ENCODE measurements at regions of chr17 and their contacts with region 1.

Region 1: GRCh38 chr17:11610999-11611566 is 12.8 kb downstream of the DNAH9 start:
- DNase-seq: peak; percentile 66
- H3K4me3 ChIP-seq: no peak overlapping the region
- H3K27ac ChIP-seq: peak overlapping the region in 1 of 2 experiments; percentile 99; a peak in 2 of 4 replicates
- H3K4me1 ChIP-seq: peaks cover 0 to 50% of the 10 kb centered on the region in 2 experiments; a peak in 3 of 4 replicates
- H3K27me3 ChIP-seq: no peaks in the 10 kb centered on the region
- CTCF ChIP-seq: no peak
- EP300 ChIP-seq: peak in 1 of 2 experiments; percentile 75; a peak in 1 of 4 replicates
- RAD21 ChIP-seq: no peak

Region 2: GRCh38 chr17:11495613-11496012 is 115.5 kb before region 1 on chr17:
- CTCF ChIA-PET with region 1: no interaction called
- POLR2A ChIA-PET with region 1: no interaction called
- DNase-seq: no peak
- H3K4me3 ChIP-seq: no peak overlapping the region
- H3K27ac ChIP-seq: no peak overlapping the region
- H3K4me1 ChIP-seq: peaks cover 0 to 6% of the 10 kb centered on the region in 2 experiments; a peak in 2 of 4 replicates
- H3K27me3 ChIP-seq: no peaks in the 10 kb centered on the region
- CTCF ChIP-seq: no peak
- EP300 ChIP-seq: no peak
- RAD21 ChIP-seq: no peak

Region 3: DNA sequence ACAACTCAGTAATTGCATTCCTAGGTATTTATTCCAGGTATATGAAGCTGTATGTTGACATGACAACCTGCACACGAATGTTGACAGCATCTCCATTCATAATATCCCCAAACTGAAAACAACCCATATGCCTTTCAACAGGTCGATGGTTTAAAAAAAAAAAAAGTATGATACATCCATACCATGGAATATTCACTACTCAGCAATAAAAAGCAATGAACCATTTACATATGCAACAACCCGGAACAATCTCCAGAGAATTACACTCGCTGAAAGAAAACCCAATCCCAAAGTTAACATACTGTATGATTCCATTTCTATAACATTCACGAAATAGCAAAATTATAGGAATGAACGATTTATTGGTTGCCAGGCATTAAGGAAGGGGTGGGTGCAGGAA is 66.1 kb before region 1 on chr17:
- CTCF ChIA-PET with region 1: no interaction called
- POLR2A ChIA-PET with region 1: no interaction called
- DNase-seq: no peak
- H3K4me3 ChIP-seq: no peak overlapping the region
- H3K27ac ChIP-seq: no peak overlapping the region
- H3K4me1 ChIP-seq: peaks cover 0 to 3% of the 10 kb centered on the region in 2 experiments; a peak in 2 of 4 replicates
- H3K27me3 ChIP-seq: no peaks in the 10 kb centered on the region
- CTCF ChIP-seq: no peak
- EP300 ChIP-seq: no peak
- RAD21 ChIP-seq: no peak

Region 4: DNA sequence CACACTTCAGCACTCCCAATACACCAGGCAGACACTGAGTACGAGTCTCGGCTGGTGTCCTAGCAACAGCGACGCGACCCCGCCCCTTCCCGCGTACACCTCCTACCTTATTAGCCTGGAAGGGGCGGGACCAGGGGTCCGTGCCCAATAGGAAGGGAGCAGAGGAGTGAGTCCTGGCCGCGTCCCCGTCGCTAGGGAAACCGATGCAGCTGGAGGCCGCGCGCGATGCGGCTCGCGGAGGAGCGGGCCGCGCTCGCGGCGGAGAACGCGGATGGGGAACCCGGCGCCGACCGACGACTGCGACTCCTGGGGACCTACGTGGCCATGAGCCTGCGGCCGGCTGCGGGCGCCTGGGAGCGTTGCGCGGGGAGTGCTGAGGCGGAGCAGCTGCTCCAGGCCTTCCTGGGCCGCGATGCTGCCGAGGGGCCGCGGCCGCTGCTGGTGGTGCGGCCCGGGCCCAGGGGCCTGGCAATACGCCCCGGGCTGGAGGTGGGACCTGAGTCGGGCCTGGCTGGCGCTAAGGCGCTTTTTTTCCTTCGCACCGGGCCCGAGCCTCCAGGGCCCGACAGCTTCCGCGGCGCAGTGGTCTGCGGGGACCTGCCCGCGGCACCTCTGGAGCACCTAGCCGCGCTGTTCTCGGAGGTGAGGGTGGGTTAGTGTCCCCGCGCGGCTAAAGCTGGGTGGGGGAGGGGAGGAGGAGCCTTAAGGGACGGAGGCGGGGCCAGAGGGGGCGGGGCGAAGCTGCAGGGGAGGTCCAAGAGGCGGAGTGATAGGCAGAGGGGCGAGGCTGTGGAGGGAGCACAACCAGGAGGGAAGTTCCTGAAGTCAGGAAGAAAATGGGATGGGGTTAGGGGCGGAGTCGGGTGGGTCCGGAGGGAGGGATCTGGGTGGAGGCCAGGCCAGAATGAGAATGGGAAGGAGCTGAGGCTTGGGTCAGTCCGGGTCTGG is 12.5 kb before region 1 on chr17 and contains the start of gene DNAH9:
- CTCF ChIA-PET with region 1: interaction called, 4 read pairs
- POLR2A ChIA-PET with region 1: interaction called, 12 read pairs
- DNase-seq: peak; percentile 92
- H3K4me3 ChIP-seq: peak within 1 kb of the TSS in 1 of 2 experiments; percentile 55; a peak in 2 of 4 replicates
- H3K27ac ChIP-seq: peak within 1 kb of the TSS in 1 of 2 experiments; percentile 78; a peak in 2 of 4 replicates
- H3K4me1 ChIP-seq: peaks cover 0 to 9% of the 10 kb centered on the region in 2 experiments; a peak in 2 of 4 replicates
- H3K27me3 ChIP-seq: no peaks in the 10 kb centered on the region
- CTCF ChIP-seq: no peak
- EP300 ChIP-seq: no peak
- RAD21 ChIP-seq: no peak
- polyA plus RNA-seq, gene DNAH9: 0.05 TPM in 1 of 2 replicates, not detected in the other

Region 5: DNA sequence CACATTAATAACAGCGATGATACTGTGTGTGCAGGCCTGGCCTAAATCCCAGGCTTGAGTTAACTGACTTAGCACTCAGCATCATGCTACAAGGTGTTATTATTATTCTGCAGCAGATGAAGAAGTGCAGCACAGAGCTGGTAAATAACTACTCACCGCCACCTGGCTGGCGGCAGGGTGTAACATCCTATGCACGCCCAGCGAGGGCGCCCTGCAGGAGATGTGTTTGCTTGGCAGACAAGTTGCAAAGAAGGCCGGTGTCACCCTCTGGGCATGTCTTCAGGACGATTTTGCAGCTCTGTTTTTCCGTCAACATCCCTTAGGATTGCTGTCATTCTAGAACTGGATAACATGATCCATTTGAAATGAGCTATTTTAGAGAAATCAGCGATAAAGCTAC is 17.3 kb after region 1 on chr17:
- CTCF ChIA-PET with region 1: no interaction called
- POLR2A ChIA-PET with region 1: no interaction called
- DNase-seq: no peak
- H3K4me3 ChIP-seq: no peak overlapping the region
- H3K27ac ChIP-seq: no peak overlapping the region
- H3K4me1 ChIP-seq: no peaks in the 10 kb centered on the region; a peak in 1 of 4 replicates
- H3K27me3 ChIP-seq: no peaks in the 10 kb centered on the region
- CTCF ChIP-seq: no peak
- EP300 ChIP-seq: no peak
- RAD21 ChIP-seq: no peak